ENCODE measurements at regions of chr1 and their contacts with region 1.

Region 1: DNA sequence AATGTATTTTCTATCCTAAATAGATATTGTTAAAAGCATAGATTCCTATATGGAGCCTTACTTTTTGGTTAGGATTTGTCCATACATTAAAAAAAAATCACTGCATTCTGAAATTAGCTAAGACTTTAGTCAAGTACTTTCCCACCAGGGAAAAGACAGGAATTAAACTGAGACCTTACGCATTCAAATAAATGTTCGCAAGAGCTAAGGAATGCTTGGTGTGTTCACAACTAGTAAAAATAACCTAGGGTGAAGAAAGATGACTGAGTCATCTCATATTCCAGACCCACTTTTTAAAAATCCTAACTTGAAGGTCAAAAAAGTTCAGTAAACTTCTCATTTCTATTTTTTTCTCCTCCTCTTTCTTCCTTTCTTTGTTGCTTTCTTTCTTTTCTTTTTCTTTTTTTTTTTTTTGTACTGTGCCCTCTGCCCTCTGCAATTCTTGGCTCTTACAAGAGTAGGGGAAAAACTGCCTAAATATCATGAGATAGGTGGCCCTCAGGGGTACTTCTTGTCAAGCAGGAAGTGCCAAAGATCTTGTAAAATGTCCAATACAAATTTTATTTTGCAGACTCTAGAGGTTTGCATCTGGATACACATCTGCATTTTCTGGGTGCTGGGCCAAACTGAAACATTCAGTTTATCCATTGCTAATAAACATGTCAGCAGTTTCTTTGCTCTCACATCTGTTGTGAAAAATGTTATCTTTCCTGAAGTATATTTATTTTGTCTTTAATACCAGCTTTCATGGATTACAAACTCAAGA is 121.4 kb upstream of the GORAB start:
- DNase-seq: no peak
- ATAC-seq: peak; percentile 84

Region 2: GRCh38 chr1:170074250-170075157 is 336.1 kb before region 1 on chr1 and contains the start of gene KIFAP3:
- intact Hi-C with region 1: loop called (anchors 10 kb)
- DNase-seq: peak; percentile 99
- ATAC-seq: peak; percentile 100
- total RNA-seq, gene KIFAP3: 31.0 TPM

Region 3: DNA sequence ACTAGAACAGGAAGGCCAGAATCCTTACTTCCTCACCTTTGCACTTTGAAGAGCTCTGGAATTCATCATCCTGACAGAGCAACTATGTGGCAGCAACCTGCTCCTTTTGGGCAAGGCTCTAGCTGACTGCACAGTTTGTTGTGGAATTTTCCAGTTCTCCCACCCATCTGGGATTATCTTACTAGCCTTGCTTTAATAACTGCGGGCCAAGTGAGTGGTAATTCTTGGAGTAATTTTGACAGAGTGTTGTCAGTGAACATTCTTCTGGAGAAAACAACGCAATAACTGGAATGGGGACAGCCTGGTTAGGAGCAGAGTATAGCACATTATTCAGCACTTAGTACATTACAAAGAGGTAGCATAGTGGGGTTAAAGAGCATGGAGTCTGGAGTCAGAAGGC is 189.6 kb before region 1 on chr1:
- intact Hi-C with region 1: loop called (anchors 10 kb)
- DNase-seq: no peak
- ATAC-seq: peak; percentile 84

Region 4: GRCh38 chr1:170351366-170351946 is 59.1 kb before region 1 on chr1:
- intact Hi-C with region 1: loop called (anchors 5 kb)
- DNase-seq: no peak
- ATAC-seq: peak; percentile 23

Region 5: GRCh38 chr1:170369000-170369399 is 41.6 kb before region 1 on chr1:
- intact Hi-C with region 1: no loop called
- DNase-seq: no peak
- ATAC-seq: no peak

Measured in Right ventricle myocardium inferior (tissue), 1 donor.